Activated CD8-positive, alpha-beta T cell treated with anti-CD3 and anti-CD28 coated beads for 36 hours (primary cell): ENCODE measurements at regions of chr17 and their contacts with region 1.

Region 1: GRCh38 chr17:15999439-16000350 is at the starts of genes TTC19 and ZSWIM7:
- DNase-seq: peak; percentile 97
- ATAC-seq: peak; percentile 89
- H3K4me3 Mint-ChIP-seq: peak within 1 kb of the TSS; percentile 96
- H3K27ac Mint-ChIP-seq: peak within 1 kb of the TSS; percentile 96
- H3K4me1 Mint-ChIP-seq: peaks cover 28% of the 10 kb centered on the region
- H3K27me3 Mint-ChIP-seq: no peaks in the 10 kb centered on the region
- CTCF ChIP-seq: no peak
- total RNA-seq, gene TTC19: 24.7 to 26.0 TPM
- total RNA-seq, gene ZSWIM7: 14.5 to 18.2 TPM

Region 2: GRCh38 chr17:15957206-15957605 is 42.5 kb before region 1 on chr17:
- CTCF ChIA-PET with region 1: no interaction called
- POLR2A ChIA-PET with region 1: interaction called, 11 read pairs
- intact Hi-C with region 1: loop called (anchors 5 kb)
- DNase-seq: peak; percentile 57
- ATAC-seq: peak; percentile 32
- H3K4me3 Mint-ChIP-seq: no peak overlapping the region
- H3K27ac Mint-ChIP-seq: no peak overlapping the region
- H3K4me1 Mint-ChIP-seq: peaks cover 34% of the 10 kb centered on the region
- H3K27me3 Mint-ChIP-seq: peaks cover 14% of the 10 kb centered on the region
- CTCF ChIP-seq: no peak

Region 3: GRCh38 chr17:16122697-16123434 is 123.2 kb after region 1 on chr17:
- CTCF ChIA-PET with region 1: no interaction called
- POLR2A ChIA-PET with region 1: no interaction called
- intact Hi-C with region 1: no loop called
- DNase-seq: no peak
- ATAC-seq: no peak
- H3K4me3 Mint-ChIP-seq: no peak overlapping the region
- H3K27ac Mint-ChIP-seq: no peak overlapping the region
- H3K4me1 Mint-ChIP-seq: no peaks in the 10 kb centered on the region
- H3K27me3 Mint-ChIP-seq: no peaks in the 10 kb centered on the region
- CTCF ChIP-seq: no peak